Dendritic cell treated with granulocyte-macrophage colony-stimulating factor and Interleukin-4, amounts not matched to agents 40 ng/mL and 50 ng/mL, for 4 days (primary cell): ENCODE measurements at regions of chr5 and their contacts with region 1.

Region 1: GRCh38 chr5:157431544-157432200 is 28.3 kb upstream of the NIPAL4 start:
- H3K4me3 Mint-ChIP-seq: no peak overlapping the region
- H3K27ac Mint-ChIP-seq: no peak overlapping the region
- H3K4me1 Mint-ChIP-seq: peaks cover 13% of the 10 kb centered on the region
- H3K27me3 Mint-ChIP-seq: peaks cover 11% of the 10 kb centered on the region

Region 2: GRCh38 chr5:157384971-157385709 is 46.5 kb before region 1 on chr5:
- intact Hi-C with region 1: no loop called
- H3K4me3 Mint-ChIP-seq: no peak overlapping the region
- H3K27ac Mint-ChIP-seq: no peak overlapping the region
- H3K4me1 Mint-ChIP-seq: no peaks in the 10 kb centered on the region
- H3K27me3 Mint-ChIP-seq: no peaks in the 10 kb centered on the region

Region 3: GRCh38 chr5:157476702-157477408 is 45.2 kb after region 1 on chr5:
- intact Hi-C with region 1: loop called (anchors 2 kb)
- H3K4me3 Mint-ChIP-seq: no peak overlapping the region
- H3K27ac Mint-ChIP-seq: no peak overlapping the region
- H3K4me1 Mint-ChIP-seq: peaks cover 39% of the 10 kb centered on the region
- H3K27me3 Mint-ChIP-seq: no peaks in the 10 kb centered on the region